Endothelial cell of umbilical vein (primary cell): ENCODE measurements at regions of chr15 and their contacts with region 1.

Region 1: DNA sequence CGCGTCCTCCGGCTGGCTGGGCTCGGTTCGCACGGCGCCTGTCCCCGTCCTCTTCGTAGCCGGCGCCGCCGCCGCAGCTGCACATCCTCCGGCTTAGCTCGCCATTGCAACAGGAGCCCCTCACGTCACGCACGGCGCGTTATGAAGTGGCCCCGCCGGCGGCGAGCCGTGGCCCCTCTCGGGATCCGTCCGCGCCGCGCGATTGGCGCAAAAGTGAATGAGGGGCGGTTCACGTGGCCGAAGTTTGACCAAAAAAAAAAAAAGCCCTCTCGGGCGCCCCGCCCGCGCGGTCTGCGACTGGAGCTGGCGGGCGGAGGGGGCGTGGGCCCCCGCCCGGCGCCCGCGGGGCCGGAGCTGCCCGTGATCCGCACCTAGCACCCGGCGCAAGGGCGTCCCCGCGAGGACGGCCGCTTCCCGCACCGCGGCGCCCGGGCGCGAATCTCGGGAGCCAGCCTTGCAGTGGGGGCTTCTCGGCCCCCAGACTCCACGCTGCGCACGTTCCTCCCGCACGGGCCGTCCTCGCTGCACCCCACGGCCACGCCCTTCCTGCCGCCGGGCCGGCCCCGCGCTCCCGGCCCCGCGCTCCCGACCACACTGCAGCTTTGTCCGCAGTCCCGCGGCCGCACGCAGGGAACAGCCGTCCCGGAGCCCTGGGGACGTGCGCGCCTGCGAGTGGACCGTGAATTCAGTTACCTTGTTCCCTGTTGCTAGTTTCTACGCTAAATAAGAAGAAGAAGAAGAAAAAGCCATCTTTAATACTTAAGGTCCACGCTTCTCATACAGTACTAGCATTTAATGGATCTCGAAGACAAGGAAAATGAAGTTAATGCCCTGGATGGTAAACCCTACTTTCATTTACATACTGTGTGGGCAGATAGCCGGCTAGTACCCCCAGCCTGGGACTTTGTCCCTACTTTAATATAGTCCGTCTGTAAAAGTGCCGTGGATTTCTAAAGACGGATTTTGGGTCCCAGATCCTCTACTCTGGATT is at the start of gene CHSY1:
- DNase-seq: peak; percentile 94
- H3K4me3 ChIP-seq: peak within 1 kb of the TSS; percentile 53 to 86 (median 83)
- H3K27ac ChIP-seq: peak within 1 kb of the TSS; percentile 70
- H3K4me1 ChIP-seq: peaks cover 30% of the 10 kb centered on the region
- H3K27me3 ChIP-seq: no peaks in the 10 kb centered on the region
- CTCF ChIP-seq: peak; percentile 12 to 25
- POLR2A ChIP-seq: peak; percentile 68
- total RNA-seq, gene CHSY1: 47.0 and 50.8 TPM in 2 replicates

Region 2: DNA sequence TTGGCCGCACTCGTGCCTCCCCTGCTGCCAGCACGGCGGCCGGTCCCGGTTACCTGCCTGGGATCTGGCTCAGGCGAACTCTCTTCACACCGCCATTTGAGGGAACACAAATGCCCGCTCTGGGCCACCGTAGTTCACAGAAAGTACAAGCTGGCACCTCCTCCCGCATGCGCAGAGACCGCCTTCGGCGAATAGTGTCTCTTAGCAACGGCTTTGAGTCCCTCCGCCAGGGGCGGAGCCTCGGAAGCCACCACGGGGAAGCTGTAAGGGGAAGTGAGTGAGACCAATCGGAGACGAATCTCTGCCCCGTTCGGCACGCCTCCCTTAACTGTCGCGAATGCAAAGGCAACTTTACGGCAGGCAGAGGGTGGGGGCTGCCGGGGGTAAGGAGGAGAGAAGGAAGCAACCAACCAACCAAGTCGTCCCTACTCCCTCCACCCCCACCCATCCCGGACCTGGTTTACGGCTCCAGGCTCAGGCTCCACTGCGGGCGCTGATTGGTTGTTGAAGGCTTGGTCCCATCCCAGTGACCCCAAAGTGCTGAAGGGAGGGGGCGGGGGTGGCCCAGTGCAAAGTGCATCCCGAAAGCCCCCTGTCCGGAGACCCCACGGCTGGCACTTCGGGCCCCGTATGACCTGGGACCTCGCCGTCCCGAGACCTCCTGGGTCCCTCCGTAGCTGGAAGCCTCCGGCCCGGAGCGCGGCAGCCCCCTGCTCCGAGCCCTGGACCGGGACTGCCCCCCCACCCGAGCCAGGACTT is 649.9 kb before region 1 on chr15 and contains the starts of genes ASB7 and LINS1:
- CTCF ChIA-PET with region 1: no interaction called
- POLR2A ChIA-PET with region 1: no interaction called
- dilution Hi-C with region 1: no loop called
- intact Hi-C with region 1: loop called (anchors 10 kb)
- DNase-seq: peak; percentile 100
- H3K4me3 ChIP-seq: peak within 1 kb of the TSS; percentile 84 to 99 (median 96)
- H3K27ac ChIP-seq: peak within 1 kb of the TSS; percentile 71
- H3K4me1 ChIP-seq: peaks cover 21% of the 10 kb centered on the region
- H3K27me3 ChIP-seq: no peaks in the 10 kb centered on the region
- CTCF ChIP-seq: no peak
- POLR2A ChIP-seq: no peak
- total RNA-seq, gene ASB7: 13.0 and 13.3 TPM in 2 replicates
- total RNA-seq, gene LINS1: 9.6 and 14.7 TPM in 2 replicates

Region 3: GRCh38 chr15:101121511-101122090 is 130.5 kb before region 1 on chr15:
- CTCF ChIA-PET with region 1: interaction called, 22 read pairs
- POLR2A ChIA-PET with region 1: interaction called, 14 read pairs
- dilution Hi-C with region 1: no loop called
- intact Hi-C with region 1: no loop called
- DNase-seq: peak; percentile 78
- H3K4me3 ChIP-seq: no peak overlapping the region
- H3K27ac ChIP-seq: no peak overlapping the region
- H3K4me1 ChIP-seq: peaks cover 3% of the 10 kb centered on the region
- H3K27me3 ChIP-seq: no peaks in the 10 kb centered on the region
- CTCF ChIP-seq: peak; percentile 28 to 66
- POLR2A ChIP-seq: no peak

Region 4: GRCh38 chr15:101167753-101168463 is 84.2 kb before region 1 on chr15:
- CTCF ChIA-PET with region 1: interaction called, 17 read pairs
- POLR2A ChIA-PET with region 1: interaction called, 6 read pairs
- dilution Hi-C with region 1: no loop called
- intact Hi-C with region 1: loop called (anchors 1 kb)
- DNase-seq: peak; percentile 95
- H3K4me3 ChIP-seq: peak overlapping the region in 1 of 3 experiments; percentile 19
- H3K27ac ChIP-seq: peak overlapping the region; percentile 98
- H3K4me1 ChIP-seq: peaks cover 37% of the 10 kb centered on the region
- H3K27me3 ChIP-seq: no peaks in the 10 kb centered on the region
- CTCF ChIP-seq: no peak
- POLR2A ChIP-seq: no peak

Region 5: GRCh38 chr15:101183226-101183930 is 68.7 kb before region 1 on chr15:
- CTCF ChIA-PET with region 1: interaction called, 9 read pairs
- POLR2A ChIA-PET with region 1: interaction called, 4 read pairs
- dilution Hi-C with region 1: no loop called
- intact Hi-C with region 1: loop called (anchors 1 kb)
- DNase-seq: peak; percentile 90
- H3K4me3 ChIP-seq: peak overlapping the region in 1 of 3 experiments; percentile 8
- H3K27ac ChIP-seq: peak overlapping the region; percentile 57
- H3K4me1 ChIP-seq: peaks cover 49% of the 10 kb centered on the region
- H3K27me3 ChIP-seq: no peaks in the 10 kb centered on the region
- CTCF ChIP-seq: no peak
- POLR2A ChIP-seq: no peak

Region 6: DNA sequence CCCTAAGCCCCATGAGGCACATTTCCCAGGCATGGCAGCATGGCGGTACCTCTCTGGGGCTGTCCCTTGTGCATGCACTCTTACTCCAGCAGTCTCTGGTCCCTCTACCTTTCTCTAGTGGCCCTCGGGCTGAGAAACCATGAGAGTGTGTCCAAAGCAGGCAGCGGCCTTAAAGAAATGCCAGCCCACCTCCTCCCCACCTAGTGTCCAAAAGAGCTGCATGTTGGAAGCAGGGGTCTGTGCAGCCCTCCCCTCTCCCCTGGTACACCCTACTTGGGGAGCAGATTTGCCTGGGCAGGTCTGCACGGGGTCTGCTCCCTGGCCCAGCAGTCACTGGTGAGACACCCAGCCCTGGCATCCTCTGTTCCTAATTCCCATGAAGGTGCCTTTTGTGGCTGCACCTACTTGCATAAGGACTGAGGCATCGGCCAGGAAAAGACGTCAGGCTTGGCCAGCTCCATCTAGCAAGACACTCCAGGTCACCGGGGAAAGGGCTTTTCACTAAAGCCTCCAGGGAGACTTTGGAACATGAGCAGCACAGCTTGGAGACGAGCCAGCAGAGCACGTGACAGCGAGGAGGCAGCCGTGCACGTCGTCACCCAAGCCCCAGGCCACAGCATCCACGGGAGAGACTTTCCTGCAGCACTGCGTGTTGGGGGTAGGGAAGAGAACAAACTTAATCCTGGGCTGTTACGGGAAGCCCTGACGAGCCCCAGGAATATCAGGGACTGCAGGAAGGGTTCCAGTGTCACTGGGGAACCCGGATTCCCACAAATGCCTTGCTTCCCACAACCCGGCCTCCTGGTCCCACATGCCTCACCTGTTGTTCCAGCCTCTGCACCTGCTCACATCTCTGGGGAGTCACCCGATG is 361.2 kb after region 1 on chr15:
- CTCF ChIA-PET with region 1: no interaction called
- POLR2A ChIA-PET with region 1: no interaction called
- dilution Hi-C with region 1: no loop called
- intact Hi-C with region 1: no loop called
- DNase-seq: no peak
- H3K4me3 ChIP-seq: no peak overlapping the region
- H3K27ac ChIP-seq: no peak overlapping the region
- H3K4me1 ChIP-seq: no peaks in the 10 kb centered on the region
- H3K27me3 ChIP-seq: no peaks in the 10 kb centered on the region
- CTCF ChIP-seq: no peak
- POLR2A ChIP-seq: no peak